ENCODE measurements at regions of chr7 and their contacts with region 1.

Region 1: DNA sequence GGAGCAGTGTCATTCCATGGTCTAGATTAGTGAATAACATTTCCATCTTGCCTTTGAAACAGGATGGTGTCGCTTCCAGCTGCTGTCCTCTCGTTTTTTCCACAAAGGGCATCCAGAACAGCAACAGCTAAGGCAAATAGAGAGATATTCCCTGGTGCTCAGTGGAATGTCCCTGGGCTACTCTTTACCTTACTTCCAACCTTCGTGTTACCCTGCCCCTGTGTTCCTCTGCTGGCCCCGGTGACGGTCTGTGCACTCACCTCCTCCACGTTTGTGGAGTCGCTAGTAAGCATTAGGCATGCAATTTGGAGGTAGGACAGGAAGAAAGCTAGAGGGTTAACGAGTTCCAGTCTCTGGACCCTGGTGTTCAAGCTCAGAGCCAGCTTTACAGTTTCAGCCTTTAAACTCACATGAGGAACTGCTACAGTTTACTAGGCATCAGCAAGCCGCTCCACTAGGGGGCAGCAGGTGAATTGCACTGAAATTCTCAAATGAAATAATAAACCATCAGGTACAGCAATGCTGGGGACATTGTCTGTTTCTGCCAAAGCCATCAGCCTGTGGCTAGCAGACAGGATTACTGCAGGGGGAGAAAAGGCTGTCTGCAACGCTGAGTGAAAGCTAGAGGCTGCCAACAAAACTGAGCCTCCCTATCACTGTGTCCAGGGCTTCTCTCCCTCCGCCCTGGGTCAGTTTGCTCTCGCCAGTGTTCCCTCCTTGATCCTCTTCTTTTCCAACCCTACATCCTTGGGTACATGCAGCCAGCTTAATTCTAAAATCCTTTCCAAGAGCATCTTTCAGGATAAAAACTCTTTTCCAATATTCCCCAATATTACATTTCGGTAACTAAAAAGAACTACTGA is 9.0 kb downstream of the MRPL32 start:
- DNase-seq: peak; percentile 81 to 90
- ATAC-seq: peak; percentile 62
- H3K4me3 ChIP-seq: no peak overlapping the region
- H3K27ac ChIP-seq: no peak overlapping the region
- H3K4me1 ChIP-seq: no peaks in the 10 kb centered on the region
- H3K27me3 ChIP-seq: no peaks in the 10 kb centered on the region

Region 2: DNA sequence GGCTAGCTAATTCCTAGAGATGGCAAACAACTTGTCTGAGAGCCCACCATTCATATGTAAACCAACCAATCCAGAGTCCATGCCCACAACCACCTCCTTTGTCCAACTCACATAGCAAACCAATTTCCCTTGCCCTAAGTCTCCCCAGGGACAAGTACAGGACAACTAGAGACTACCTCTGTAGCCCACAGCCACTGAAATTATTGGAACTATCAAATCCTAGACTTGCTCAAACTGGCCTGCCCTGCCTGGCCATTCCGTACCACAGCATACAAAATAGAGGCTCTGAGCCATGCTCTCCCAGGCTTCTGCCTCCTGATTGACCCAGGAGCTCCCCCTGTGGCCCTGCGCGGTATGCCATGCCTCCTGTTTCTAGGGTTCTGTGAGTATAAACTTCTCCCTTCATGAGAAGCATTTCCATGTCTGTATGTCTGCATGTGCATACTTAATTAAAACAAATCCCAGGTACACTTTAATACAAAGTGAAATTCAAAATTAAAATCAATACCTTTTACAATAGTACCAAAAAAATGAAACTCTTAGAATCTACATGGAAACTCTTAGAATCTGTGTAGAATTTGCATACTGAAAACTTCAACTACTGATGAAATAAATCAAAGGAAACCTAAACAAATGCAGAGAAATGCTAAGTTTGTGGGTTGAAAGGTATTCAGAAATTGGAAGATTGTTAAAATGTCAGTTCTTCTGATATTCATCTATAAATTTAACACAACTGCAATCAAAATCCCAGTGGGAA is 167.2 kb after region 1 on chr7:
- intact Hi-C with region 1: loop called (anchors 5 to 10 kb)
- DNase-seq: peak; percentile 70 to 83
- ATAC-seq: peak; percentile 61
- H3K4me3 ChIP-seq: no peak overlapping the region
- H3K27ac ChIP-seq: no peak overlapping the region
- H3K4me1 ChIP-seq: no peaks in the 10 kb centered on the region
- H3K27me3 ChIP-seq: peaks cover 0 to 3% of the 10 kb centered on the region in 2 donors

Region 3: DNA sequence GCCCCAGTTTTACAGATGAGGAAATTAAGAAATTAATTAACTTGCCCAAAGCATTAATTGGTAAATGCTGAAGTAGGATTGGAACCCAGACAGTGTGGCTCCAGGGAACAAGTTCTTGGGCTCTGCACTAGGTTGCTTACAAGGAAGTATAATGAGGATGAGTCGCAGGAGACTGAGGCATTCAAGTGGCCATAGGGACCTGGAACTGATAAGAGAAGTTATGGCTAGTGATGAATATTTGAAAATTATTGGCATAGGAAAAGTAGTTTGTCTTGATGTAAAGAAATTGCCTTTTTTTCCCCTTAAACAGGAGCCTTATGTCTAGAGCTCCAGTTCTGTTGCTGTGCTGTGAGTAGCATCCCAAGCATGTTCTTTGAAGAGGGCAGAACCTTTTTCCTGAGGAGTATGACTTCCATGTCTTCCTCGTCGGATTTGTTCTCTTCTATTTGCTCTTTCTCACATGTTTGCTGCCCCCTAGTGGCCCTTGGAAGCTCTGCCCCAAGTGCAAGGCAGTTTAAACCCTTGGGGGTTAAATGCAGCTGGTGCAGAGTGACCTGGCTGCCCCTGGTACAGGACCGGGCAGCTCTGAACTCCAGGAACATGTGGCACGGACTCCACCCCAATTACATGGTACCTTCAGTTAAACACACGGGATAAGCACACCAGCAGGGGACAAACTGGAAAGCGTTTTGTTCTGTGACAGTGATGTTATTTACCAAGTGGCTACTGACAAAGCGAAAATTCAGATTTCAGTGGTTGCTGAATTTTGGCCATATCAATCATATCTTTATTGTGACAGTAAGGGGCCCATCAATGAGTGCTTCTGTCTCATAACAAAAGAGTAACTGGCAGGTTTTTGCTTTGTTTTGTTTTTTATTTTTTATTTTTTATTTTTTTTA is 320.0 kb after region 1 on chr7:
- intact Hi-C with region 1: loop called (anchors 2 kb)
- DNase-seq: peak; percentile 68 to 83
- ATAC-seq: no peak
- H3K4me3 ChIP-seq: no peak overlapping the region
- H3K27ac ChIP-seq: no peak overlapping the region
- H3K4me1 ChIP-seq: no peaks in the 10 kb centered on the region
- H3K27me3 ChIP-seq: no peaks in the 10 kb centered on the region

Measured in aorta (tissue), 5 donors.